ENCODE measurements at regions of chr18 and their contacts with region 1.

Region 1: DNA sequence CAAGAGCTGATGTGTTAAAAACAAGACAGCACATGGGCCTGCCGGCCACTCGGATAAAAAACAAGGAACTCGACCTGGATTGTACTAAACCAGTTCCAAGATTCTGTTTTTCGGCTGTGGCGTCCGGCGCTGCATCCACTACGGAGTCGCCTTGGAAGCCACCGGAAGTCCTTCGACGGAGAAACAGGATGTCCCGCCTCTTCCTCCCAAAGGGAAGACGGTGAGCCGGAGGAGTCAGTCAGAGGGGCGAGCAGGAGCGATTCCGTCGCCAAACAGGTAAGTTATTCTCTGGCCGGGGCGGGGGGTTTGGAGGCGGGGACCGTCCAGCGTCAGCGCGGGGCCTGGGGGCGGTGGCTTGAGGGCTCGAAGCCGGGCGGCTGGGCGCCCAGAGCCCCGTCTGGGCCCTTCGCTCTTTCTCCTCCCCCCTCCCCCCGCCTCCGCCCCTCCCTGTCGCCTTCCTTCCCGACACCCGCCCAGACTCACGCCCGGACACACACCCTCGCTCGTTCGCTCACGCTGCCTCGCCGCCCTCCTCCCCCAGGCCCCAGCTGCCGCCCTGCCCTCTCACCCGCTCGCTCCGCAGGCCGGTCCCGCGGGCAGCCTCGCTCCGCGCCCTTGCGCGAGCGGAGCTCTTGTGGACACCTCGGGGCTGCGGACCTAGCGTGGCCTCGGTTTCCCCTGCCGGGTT is at the start of gene ZNF407:
- DNase-seq: peak; percentile 76 to 94 (median 86)
- ATAC-seq: peak; percentile 76
- H3K4me3 ChIP-seq: peak within 1 kb of the TSS; percentile 94 to 98
- H3K4me3 Mint-ChIP-seq: peak within 1 kb of the TSS; percentile 95
- H3K27ac ChIP-seq: peak within 1 kb of the TSS; percentile 94 to 98
- H3K27ac Mint-ChIP-seq: peak within 1 kb of the TSS; percentile 99
- H3K4me1 ChIP-seq: peaks cover 25% of the 10 kb centered on the region
- H3K4me1 Mint-ChIP-seq: peaks cover 50% of the 10 kb centered on the region
- H3K27me3 ChIP-seq: no peaks in the 10 kb centered on the region
- H3K27me3 Mint-ChIP-seq: no peaks in the 10 kb centered on the region
- CTCF ChIP-seq: no peak
- total RNA-seq, gene ZNF407: 18.4 to 18.5 TPM

Region 2: GRCh38 chr18:74147779-74148542 is 449.8 kb before region 1 on chr18 and contains the starts of genes FBXO15 and TIMM21:
- CTCF ChIA-PET with region 1: no interaction called
- POLR2A ChIA-PET with region 1: interaction called, 4 read pairs
- intact Hi-C with region 1: loop called (anchors 1 kb)
- DNase-seq: peak; percentile 89 to 99 (median 96)
- ATAC-seq: peak; percentile 83
- H3K4me3 ChIP-seq: peak within 1 kb of the TSS; percentile 84 to 91
- H3K4me3 Mint-ChIP-seq: peak within 1 kb of the TSS; percentile 90
- H3K27ac ChIP-seq: peak within 1 kb of the TSS; percentile 92 to 99
- H3K27ac Mint-ChIP-seq: peak within 1 kb of the TSS; percentile 92
- H3K4me1 ChIP-seq: peaks cover 21% of the 10 kb centered on the region
- H3K4me1 Mint-ChIP-seq: peaks cover 53% of the 10 kb centered on the region
- H3K27me3 ChIP-seq: no peaks in the 10 kb centered on the region
- H3K27me3 Mint-ChIP-seq: no peaks in the 10 kb centered on the region
- CTCF ChIP-seq: no peak
- total RNA-seq, gene FBXO15: 1.0 to 1.3 TPM
- total RNA-seq, gene TIMM21: 20.2 to 20.8 TPM

Region 3: DNA sequence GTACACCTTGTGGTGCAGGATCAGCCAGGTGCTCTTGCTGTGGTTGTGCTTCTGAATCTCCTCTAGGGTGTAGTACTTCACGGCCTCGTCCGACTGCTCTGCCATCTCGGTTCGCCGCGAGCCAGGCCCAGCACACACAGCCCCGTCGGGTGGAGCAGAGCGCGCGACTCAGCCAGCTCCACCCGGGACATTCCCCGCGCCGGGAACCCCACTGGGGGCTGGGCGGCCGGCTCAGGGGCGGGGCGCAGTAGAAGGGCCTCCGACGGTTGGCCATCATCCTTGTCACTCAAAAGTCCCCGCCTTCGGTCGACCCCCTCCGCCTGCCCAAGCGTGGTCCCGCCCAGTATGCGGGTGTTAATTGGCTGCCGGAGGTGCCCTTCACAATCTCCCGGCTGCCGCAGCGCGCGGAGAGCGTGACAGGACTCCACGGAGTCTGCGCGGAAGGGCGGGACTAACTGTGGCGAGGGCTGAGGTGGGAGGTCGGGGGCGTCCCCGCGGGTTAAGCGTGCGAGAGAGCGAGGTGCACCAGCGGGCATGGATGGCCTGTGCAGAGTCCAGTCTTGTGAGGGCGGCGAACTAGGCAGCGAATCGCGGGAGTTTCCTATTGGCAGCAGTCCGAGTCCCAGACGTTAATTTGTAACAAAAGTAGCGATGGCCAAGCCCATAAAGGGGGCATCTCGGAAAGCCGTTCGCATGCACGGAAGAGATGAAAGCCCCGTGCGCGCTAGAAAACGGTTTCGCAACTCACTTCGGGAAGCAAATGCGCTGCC is 305.9 kb before region 1 on chr18 and contains the start of gene CYB5A:
- CTCF ChIA-PET with region 1: no interaction called
- POLR2A ChIA-PET with region 1: no interaction called
- intact Hi-C with region 1: loop called (anchors 1 kb)
- DNase-seq: peak; percentile 98 to 99 (median 99)
- ATAC-seq: peak; percentile 94
- H3K4me3 ChIP-seq: peak within 1 kb of the TSS; percentile 85 to 100
- H3K4me3 Mint-ChIP-seq: no peak within 1 kb of the TSS
- H3K27ac ChIP-seq: peak within 1 kb of the TSS; percentile 44 to 61
- H3K27ac Mint-ChIP-seq: peak within 1 kb of the TSS; percentile 86
- H3K4me1 ChIP-seq: peaks cover 8% of the 10 kb centered on the region
- H3K4me1 Mint-ChIP-seq: peaks cover 21% of the 10 kb centered on the region
- H3K27me3 ChIP-seq: no peaks in the 10 kb centered on the region
- H3K27me3 Mint-ChIP-seq: no peaks in the 10 kb centered on the region
- CTCF ChIP-seq: peak; percentile 4
- total RNA-seq, gene CYB5A: 4.4 to 5.9 TPM

Region 4: GRCh38 chr18:74370115-74370514 is 227.7 kb before region 1 on chr18:
- CTCF ChIA-PET with region 1: no interaction called
- POLR2A ChIA-PET with region 1: no interaction called
- intact Hi-C with region 1: loop called (anchors 5 kb)
- DNase-seq: no peak
- ATAC-seq: no peak
- H3K4me3 ChIP-seq: no peak overlapping the region
- H3K4me3 Mint-ChIP-seq: no peak overlapping the region
- H3K27ac ChIP-seq: no peak overlapping the region
- H3K27ac Mint-ChIP-seq: no peak overlapping the region
- H3K4me1 ChIP-seq: peaks cover 55% of the 10 kb centered on the region
- H3K4me1 Mint-ChIP-seq: peaks cover 56% of the 10 kb centered on the region
- H3K27me3 ChIP-seq: peaks cover 0 to 3% of the 10 kb centered on the region in 2 experiments
- H3K27me3 Mint-ChIP-seq: peaks cover 2% of the 10 kb centered on the region
- CTCF ChIP-seq: no peak

Region 5: GRCh38 chr18:74631623-74632283 is 33.9 kb after region 1 on chr18:
- CTCF ChIA-PET with region 1: interaction called, 4 read pairs
- POLR2A ChIA-PET with region 1: interaction called, 23 read pairs
- intact Hi-C with region 1: loop called in 1 of 2 experiments (anchors 2 kb)
- DNase-seq: peak in 4 of 9 experiments; percentile 11 to 65 (median 44)
- ATAC-seq: peak; percentile 83
- H3K4me3 ChIP-seq: peak overlapping the region; percentile 12 to 19
- H3K4me3 Mint-ChIP-seq: peak overlapping the region; percentile 83
- H3K27ac ChIP-seq: peak overlapping the region; percentile 38 to 50
- H3K27ac Mint-ChIP-seq: peak overlapping the region; percentile 96
- H3K4me1 ChIP-seq: peaks cover 30% of the 10 kb centered on the region
- H3K4me1 Mint-ChIP-seq: peaks cover 41% of the 10 kb centered on the region
- H3K27me3 ChIP-seq: no peaks in the 10 kb centered on the region
- H3K27me3 Mint-ChIP-seq: no peaks in the 10 kb centered on the region
- CTCF ChIP-seq: no peak

Region 6: GRCh38 chr18:74760446-74760845 is 162.6 kb after region 1 on chr18:
- CTCF ChIA-PET with region 1: no interaction called
- POLR2A ChIA-PET with region 1: no interaction called
- intact Hi-C with region 1: no loop called
- DNase-seq: no peak
- ATAC-seq: no peak
- H3K4me3 ChIP-seq: no peak overlapping the region
- H3K4me3 Mint-ChIP-seq: no peak overlapping the region
- H3K27ac ChIP-seq: no peak overlapping the region
- H3K27ac Mint-ChIP-seq: no peak overlapping the region
- H3K4me1 ChIP-seq: no peaks in the 10 kb centered on the region
- H3K4me1 Mint-ChIP-seq: peaks cover 6% of the 10 kb centered on the region
- H3K27me3 ChIP-seq: no peaks in the 10 kb centered on the region
- H3K27me3 Mint-ChIP-seq: no peaks in the 10 kb centered on the region
- CTCF ChIP-seq: no peak

Region 7: DNA sequence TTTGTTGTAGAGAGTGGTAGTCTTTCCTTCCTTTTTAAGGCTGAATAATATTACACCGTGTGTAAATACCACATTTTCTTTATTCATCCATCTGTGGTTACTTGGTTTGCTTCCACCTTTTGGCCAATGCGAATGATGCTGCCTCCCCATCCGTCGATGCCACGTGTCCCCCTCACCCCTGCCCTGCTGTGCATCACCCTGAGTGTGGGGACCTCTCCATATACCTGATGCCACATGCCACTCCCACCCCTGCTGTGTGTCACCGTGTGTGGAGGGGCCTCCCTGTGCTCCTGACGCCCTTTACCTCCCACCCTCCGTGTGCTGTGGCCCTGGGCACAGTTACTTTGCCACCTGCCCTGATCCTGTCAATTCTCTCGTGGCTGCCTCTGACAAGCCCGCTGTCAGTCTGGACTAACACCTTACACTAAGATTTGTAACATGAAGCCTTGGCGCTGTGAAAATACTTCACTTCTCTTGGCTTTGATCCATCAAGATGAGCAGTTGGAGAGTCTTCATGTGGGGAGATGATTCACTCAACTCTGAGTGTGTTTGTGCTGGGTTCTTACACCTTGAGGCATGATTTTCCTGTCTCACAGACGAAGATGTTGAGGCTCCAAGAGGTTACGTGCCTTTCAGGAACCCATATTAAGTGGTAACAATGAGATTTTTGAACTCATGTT is 233.9 kb after region 1 on chr18:
- CTCF ChIA-PET with region 1: no interaction called
- POLR2A ChIA-PET with region 1: no interaction called
- intact Hi-C with region 1: no loop called
- DNase-seq: no peak
- ATAC-seq: no peak
- H3K4me3 ChIP-seq: no peak overlapping the region
- H3K4me3 Mint-ChIP-seq: no peak overlapping the region
- H3K27ac ChIP-seq: no peak overlapping the region
- H3K27ac Mint-ChIP-seq: no peak overlapping the region
- H3K4me1 ChIP-seq: no peaks in the 10 kb centered on the region
- H3K4me1 Mint-ChIP-seq: peaks cover 3% of the 10 kb centered on the region
- H3K27me3 ChIP-seq: no peaks in the 10 kb centered on the region
- H3K27me3 Mint-ChIP-seq: no peaks in the 10 kb centered on the region
- CTCF ChIP-seq: no peak

Region 8: GRCh38 chr18:75070625-75071483 is 473.0 kb after region 1 on chr18:
- CTCF ChIA-PET with region 1: no interaction called
- POLR2A ChIA-PET with region 1: interaction called, 3 read pairs
- intact Hi-C with region 1: loop called (anchors 2 to 5 kb)
- DNase-seq: peak; percentile 19 to 88 (median 74)
- ATAC-seq: peak; percentile 90
- H3K4me3 ChIP-seq: peak overlapping the region; percentile 9 to 46
- H3K4me3 Mint-ChIP-seq: peak overlapping the region; percentile 80
- H3K27ac ChIP-seq: peak overlapping the region; percentile 50 to 86
- H3K27ac Mint-ChIP-seq: peak overlapping the region; percentile 97
- H3K4me1 ChIP-seq: peaks cover 28% of the 10 kb centered on the region
- H3K4me1 Mint-ChIP-seq: peaks cover 41% of the 10 kb centered on the region
- H3K27me3 ChIP-seq: no peaks in the 10 kb centered on the region
- H3K27me3 Mint-ChIP-seq: no peaks in the 10 kb centered on the region
- CTCF ChIP-seq: no peak

Region 9: GRCh38 chr18:76492669-76493212 is 1894.9 kb after region 1 on chr18:
- CTCF ChIA-PET with region 1: no interaction called
- POLR2A ChIA-PET with region 1: no interaction called
- intact Hi-C with region 1: loop called (anchors 5 kb)
- DNase-seq: peak; percentile 93 to 100 (median 97)
- ATAC-seq: peak; percentile 69
- H3K4me3 ChIP-seq: peak overlapping the region; percentile 66 to 99
- H3K4me3 Mint-ChIP-seq: peak overlapping the region; percentile 92
- H3K27ac ChIP-seq: peak overlapping the region; percentile 46 to 66
- H3K27ac Mint-ChIP-seq: peak overlapping the region; percentile 87
- H3K4me1 ChIP-seq: peaks cover 19% of the 10 kb centered on the region
- H3K4me1 Mint-ChIP-seq: peaks cover 37% of the 10 kb centered on the region
- H3K27me3 ChIP-seq: peaks cover 0 to 9% of the 10 kb centered on the region in 2 experiments
- H3K27me3 Mint-ChIP-seq: peaks cover 28% of the 10 kb centered on the region
- CTCF ChIP-seq: no peak